CD4-positive, alpha-beta T cell (primary cell): ENCODE measurements at regions of chr20 and their contacts with region 1.

Region 1: GRCh38 chr20:25057234-25058050 is 497 bp downstream of the ACSS1 start:
- DNase-seq: peak; percentile 45 to 94 (median 71)
- ATAC-seq: peak; percentile 45
- H3K4me3 ChIP-seq: peak overlapping the region; percentile 94
- H3K4me3 Mint-ChIP-seq: peak overlapping the region; percentile 88
- H3K27ac ChIP-seq: peak overlapping the region; percentile 86 to 89
- H3K27ac Mint-ChIP-seq: peak overlapping the region; percentile 88
- H3K4me1 ChIP-seq: peaks cover 55% of the 10 kb centered on the region
- H3K4me1 Mint-ChIP-seq: peaks cover 63% of the 10 kb centered on the region
- H3K27me3 ChIP-seq: no peaks in the 10 kb centered on the region
- H3K27me3 Mint-ChIP-seq: no peaks in the 10 kb centered on the region
- CTCF ChIP-seq: no peak

Region 2: GRCh38 chr20:23350196-23350903 is 1707.1 kb before region 1 on chr20 and contains the start of gene NXT1:
- CTCF ChIA-PET with region 1: no interaction called
- POLR2A ChIA-PET with region 1: interaction called, 4 read pairs
- intact Hi-C with region 1: loop called in 1 of 2 experiments (anchors 5 kb)
- DNase-seq: peak; percentile 90 to 98 (median 94)
- ATAC-seq: peak; percentile 81
- H3K4me3 ChIP-seq: peak within 1 kb of the TSS; percentile 77
- H3K4me3 Mint-ChIP-seq: peak within 1 kb of the TSS; percentile 98
- H3K27ac ChIP-seq: peak within 1 kb of the TSS; percentile 99 to 100
- H3K27ac Mint-ChIP-seq: peak within 1 kb of the TSS; percentile 99
- H3K4me1 ChIP-seq: peaks cover 30% of the 10 kb centered on the region
- H3K4me1 Mint-ChIP-seq: peaks cover 30% of the 10 kb centered on the region
- H3K27me3 ChIP-seq: no peaks in the 10 kb centered on the region
- H3K27me3 Mint-ChIP-seq: no peaks in the 10 kb centered on the region
- CTCF ChIP-seq: no peak
- total RNA-seq, gene NXT1: 55.4 to 57.1 TPM

Region 3: DNA sequence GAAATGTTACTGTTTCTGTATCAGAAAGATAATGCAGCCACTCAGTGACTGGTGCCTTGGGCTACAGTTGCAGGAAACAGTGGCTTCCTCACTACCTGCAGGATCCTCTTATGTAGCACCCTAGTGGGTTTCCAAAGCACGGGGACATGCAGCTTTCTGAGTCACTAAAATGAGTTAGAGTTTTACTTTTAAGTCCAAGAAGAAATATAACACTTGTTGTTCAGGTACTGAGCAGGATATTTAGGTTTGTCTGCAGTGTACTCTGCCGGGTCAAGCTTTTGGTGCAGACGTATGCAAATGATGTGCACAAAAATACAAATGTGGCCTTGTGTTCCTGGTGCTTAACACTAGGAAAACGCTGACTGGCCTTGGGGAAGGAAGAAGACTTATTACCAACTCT is 21.5 kb before region 1 on chr20:
- CTCF ChIA-PET with region 1: no interaction called
- POLR2A ChIA-PET with region 1: interaction called, 16 read pairs
- intact Hi-C with region 1: no loop called
- DNase-seq: peak in 1 of 14 experiments; percentile 51
- ATAC-seq: peak; percentile 76
- H3K4me3 ChIP-seq: no peak overlapping the region
- H3K4me3 Mint-ChIP-seq: peak overlapping the region; percentile 60
- H3K27ac ChIP-seq: no peak overlapping the region
- H3K27ac Mint-ChIP-seq: peak overlapping the region; percentile 95
- H3K4me1 ChIP-seq: peaks cover 59% of the 10 kb centered on the region
- H3K4me1 Mint-ChIP-seq: peaks cover 54% of the 10 kb centered on the region
- H3K27me3 ChIP-seq: no peaks in the 10 kb centered on the region
- H3K27me3 Mint-ChIP-seq: no peaks in the 10 kb centered on the region
- CTCF ChIP-seq: no peak

Region 4: DNA sequence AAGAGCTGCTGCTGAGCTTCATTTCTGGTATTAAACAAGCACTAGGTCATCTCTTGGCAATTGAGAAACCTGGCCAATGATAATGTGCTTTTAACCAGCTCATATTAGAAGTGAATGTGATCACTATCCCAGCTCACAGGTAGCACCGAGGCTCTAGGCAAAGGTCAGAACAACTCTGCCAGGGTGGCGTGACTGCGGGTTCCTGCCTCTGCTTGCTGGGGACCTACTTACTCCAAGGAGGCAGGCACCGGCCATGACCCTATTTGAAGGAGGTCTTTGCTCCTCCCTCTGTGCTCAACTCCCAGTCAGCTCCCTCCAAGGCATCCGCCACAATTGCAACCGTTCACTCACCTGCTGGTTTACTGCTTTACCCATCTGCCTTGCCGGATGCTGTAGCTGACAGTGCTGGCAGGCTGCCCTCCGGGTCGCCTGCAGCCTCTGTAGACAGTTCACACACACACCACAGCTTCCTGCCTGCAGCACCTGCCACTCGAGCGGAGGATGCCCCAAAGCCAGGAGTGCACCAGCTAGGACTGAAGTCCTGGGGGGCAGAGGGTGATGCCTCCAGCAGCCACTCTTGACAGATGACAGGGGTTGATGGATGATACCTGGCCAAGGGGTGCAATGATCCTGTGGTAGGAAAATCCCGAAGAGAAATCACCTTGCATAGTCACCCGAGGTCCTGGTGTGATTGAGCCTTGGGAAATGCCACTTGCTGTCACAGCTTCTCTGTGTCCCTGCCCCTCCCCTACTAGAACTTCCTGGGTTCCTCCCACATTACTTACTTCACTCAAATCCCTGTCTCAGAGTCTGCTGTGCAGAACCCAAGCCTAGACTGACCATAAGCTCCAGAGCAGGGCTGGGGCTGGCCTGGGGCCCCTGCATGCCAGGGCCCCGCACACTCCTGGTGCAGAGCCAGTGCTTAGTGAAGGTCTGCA is 33.3 kb after region 1 on chr20:
- CTCF ChIA-PET with region 1: no interaction called
- POLR2A ChIA-PET with region 1: interaction called, 37 read pairs
- intact Hi-C with region 1: no loop called
- DNase-seq: peak in 13 of 14 experiments; percentile 40 to 92 (median 78)
- ATAC-seq: peak; percentile 98
- H3K4me3 ChIP-seq: peak overlapping the region; percentile 19
- H3K4me3 Mint-ChIP-seq: peak overlapping the region; percentile 55
- H3K27ac ChIP-seq: peak overlapping the region; percentile 25 to 42
- H3K27ac Mint-ChIP-seq: peak overlapping the region; percentile 76
- H3K4me1 ChIP-seq: peaks cover 30% of the 10 kb centered on the region
- H3K4me1 Mint-ChIP-seq: peaks cover 38% of the 10 kb centered on the region
- H3K27me3 ChIP-seq: peaks cover 0 to 4% of the 10 kb centered on the region in 2 experiments
- H3K27me3 Mint-ChIP-seq: peaks cover 9% of the 10 kb centered on the region
- CTCF ChIP-seq: no peak

Region 5: GRCh38 chr20:25100914-25101313 is 43.5 kb after region 1 on chr20:
- CTCF ChIA-PET with region 1: no interaction called
- POLR2A ChIA-PET with region 1: no interaction called
- intact Hi-C with region 1: no loop called
- DNase-seq: no peak
- ATAC-seq: no peak
- H3K4me3 ChIP-seq: no peak overlapping the region
- H3K4me3 Mint-ChIP-seq: no peak overlapping the region
- H3K27ac ChIP-seq: no peak overlapping the region
- H3K27ac Mint-ChIP-seq: no peak overlapping the region
- H3K4me1 ChIP-seq: peaks cover 3% of the 10 kb centered on the region
- H3K4me1 Mint-ChIP-seq: peaks cover 12% of the 10 kb centered on the region
- H3K27me3 ChIP-seq: peaks cover 0 to 6% of the 10 kb centered on the region in 2 experiments
- H3K27me3 Mint-ChIP-seq: peaks cover 13% of the 10 kb centered on the region
- CTCF ChIP-seq: no peak

Region 6: GRCh38 chr20:25390538-25391528 is 333.4 kb after region 1 on chr20 and contains the start of gene ABHD12:
- CTCF ChIA-PET with region 1: no interaction called
- POLR2A ChIA-PET with region 1: no interaction called
- intact Hi-C with region 1: loop called in 1 of 2 experiments (anchors 5 kb)
- DNase-seq: peak; percentile 86 to 97 (median 92)
- ATAC-seq: peak; percentile 89
- H3K4me3 ChIP-seq: peak within 1 kb of the TSS; percentile 75
- H3K4me3 Mint-ChIP-seq: peak within 1 kb of the TSS; percentile 92
- H3K27ac ChIP-seq: peak within 1 kb of the TSS in 1 of 2 donors; percentile 42
- H3K27ac Mint-ChIP-seq: peak within 1 kb of the TSS; percentile 84
- H3K4me1 ChIP-seq: peaks cover 10% of the 10 kb centered on the region
- H3K4me1 Mint-ChIP-seq: peaks cover 23% of the 10 kb centered on the region
- H3K27me3 ChIP-seq: no peaks in the 10 kb centered on the region
- H3K27me3 Mint-ChIP-seq: no peaks in the 10 kb centered on the region
- CTCF ChIP-seq: no peak
- total RNA-seq, gene ABHD12: 13.4 to 17.0 TPM